Vagina (tissue), 2 donors: ENCODE measurements at regions of chr1 and their contacts with region 1.

Region 1: GRCh38 chr1:221576268-221576667 is 165.6 kb downstream of the DUSP10 start:
- DNase-seq: no peak
- H3K4me3 ChIP-seq: no peak overlapping the region
- H3K27ac ChIP-seq: no peak overlapping the region
- H3K4me1 ChIP-seq: no peaks in the 10 kb centered on the region
- H3K27me3 ChIP-seq: no peaks in the 10 kb centered on the region
- CTCF ChIP-seq: no peak
- POLR2A ChIP-seq: no peak

Region 2: GRCh38 chr1:220708936-220709801 is 867.1 kb before region 1 on chr1:
- intact Hi-C with region 1: loop called (anchors 5 kb)
- DNase-seq: peak in 1 of 2 donors; percentile 34
- H3K4me3 ChIP-seq: no peak overlapping the region
- H3K27ac ChIP-seq: no peak overlapping the region
- H3K4me1 ChIP-seq: no peaks in the 10 kb centered on the region
- H3K27me3 ChIP-seq: no peaks in the 10 kb centered on the region
- CTCF ChIP-seq: no peak
- POLR2A ChIP-seq: no peak